Activated T-helper 2 cell treated with anti-CD3 and anti-CD28 coated beads, Interferon-gamma antibody, Interleukin-2, Interleukin-4, amounts not matched to agents 10 μg/mL and 5 μg/mL and 100 μg/mL, durations not matched to agents 14 hours and 24 hours and 36 hours (primary cell): ENCODE measurements at regions of chr1 and their contacts with region 1.

Region 1: GRCh38 chr1:74689621-74690363 is 16.2 kb upstream of the ERICH3 start:
- DNase-seq: peak; percentile 11
- H3K4me3 Mint-ChIP-seq: no peak overlapping the region
- H3K27ac Mint-ChIP-seq: no peak overlapping the region
- H3K4me1 Mint-ChIP-seq: peaks cover 1% of the 10 kb centered on the region
- H3K27me3 Mint-ChIP-seq: peaks cover 1% of the 10 kb centered on the region

Region 2: DNA sequence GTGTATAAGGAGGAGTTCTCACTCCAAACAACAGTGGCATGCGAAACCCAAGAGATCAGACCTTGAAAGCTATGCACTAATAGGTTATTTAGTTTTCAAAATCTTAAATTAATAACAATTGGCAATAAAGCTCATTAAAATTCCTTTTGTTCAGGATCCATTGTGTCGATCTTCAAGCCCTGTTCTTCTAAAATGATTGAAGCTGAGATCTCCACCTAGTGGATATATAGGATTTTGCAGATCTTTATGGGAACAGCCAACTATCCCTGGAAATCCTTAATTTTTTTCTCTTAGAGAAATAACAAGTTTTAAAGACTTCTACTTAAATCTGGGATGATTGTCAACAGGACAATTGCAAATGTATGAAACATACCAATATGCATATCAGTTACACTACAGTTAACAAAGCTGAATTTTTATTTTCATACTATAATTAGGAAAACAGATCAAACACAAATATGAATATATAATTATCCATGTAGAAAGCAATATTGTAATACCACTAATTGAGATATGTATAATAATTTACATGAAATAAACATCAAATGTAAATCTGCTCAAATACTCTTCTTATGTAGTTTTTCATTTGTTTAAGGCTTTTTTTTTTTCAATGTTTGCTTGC is 220.7 kb before region 1 on chr1:
- intact Hi-C with region 1: loop called (anchors 10 kb)
- DNase-seq: no peak
- H3K4me3 Mint-ChIP-seq: no peak overlapping the region
- H3K27ac Mint-ChIP-seq: no peak overlapping the region
- H3K4me1 Mint-ChIP-seq: no peaks in the 10 kb centered on the region
- H3K27me3 Mint-ChIP-seq: no peaks in the 10 kb centered on the region

Region 3: GRCh38 chr1:74485622-74486021 is 204.2 kb before region 1 on chr1:
- intact Hi-C with region 1: no loop called
- DNase-seq: no peak
- H3K4me3 Mint-ChIP-seq: no peak overlapping the region
- H3K27ac Mint-ChIP-seq: no peak overlapping the region
- H3K4me1 Mint-ChIP-seq: no peaks in the 10 kb centered on the region
- H3K27me3 Mint-ChIP-seq: no peaks in the 10 kb centered on the region